GM12878 (cell line): ENCODE measurements at regions of chr3 and their contacts with region 1.

Region 1: GRCh38 chr3:163809540-163809993 is 1268.7 kb downstream of the SI start:
- DNase-seq: peak; percentile 57
- ATAC-seq: peak; percentile 93
- H3K4me3 ChIP-seq: no peak overlapping the region
- H3K27ac ChIP-seq: peak overlapping the region; percentile 65
- H3K4me1 ChIP-seq: no peaks in the 10 kb centered on the region
- H3K27me3 ChIP-seq: no peaks in the 10 kb centered on the region
- CTCF ChIP-seq: no peak
- EP300 ChIP-seq: peak; percentile 54; a peak in 3 of 4 replicates
- POLR2A ChIP-seq: no peak
- RAD21 ChIP-seq: no peak

Region 2: GRCh38 chr3:163785693-163786092 is 23.9 kb before region 1 on chr3:
- CTCF ChIA-PET with region 1: interaction called, 15 read pairs
- POLR2A ChIA-PET with region 1: no interaction called
- RAD21 ChIA-PET with region 1: interaction called, 19 read pairs
- SMC1A ChIA-PET with region 1: interaction called, 11 read pairs
- in situ Hi-C with region 1: no loop called
- intact Hi-C with region 1: no loop called
- DNase-seq: no peak
- ATAC-seq: peak; percentile 82
- H3K4me3 ChIP-seq: no peak overlapping the region
- H3K27ac ChIP-seq: no peak overlapping the region
- H3K4me1 ChIP-seq: no peaks in the 10 kb centered on the region
- H3K27me3 ChIP-seq: no peaks in the 10 kb centered on the region
- CTCF ChIP-seq: peak; percentile 20 to 53 (median 36); a peak in 5 of 6 replicates
- EP300 ChIP-seq: no peak
- POLR2A ChIP-seq: no peak
- RAD21 ChIP-seq: peak; percentile 62

Region 3: GRCh38 chr3:163863146-163863545 is 53.6 kb after region 1 on chr3:
- CTCF ChIA-PET with region 1: no interaction called
- POLR2A ChIA-PET with region 1: no interaction called
- RAD21 ChIA-PET with region 1: no interaction called
- SMC1A ChIA-PET with region 1: no interaction called
- in situ Hi-C with region 1: no loop called
- intact Hi-C with region 1: no loop called
- DNase-seq: no peak
- ATAC-seq: no peak
- H3K4me3 ChIP-seq: no peak overlapping the region
- H3K27ac ChIP-seq: no peak overlapping the region
- H3K4me1 ChIP-seq: no peaks in the 10 kb centered on the region
- H3K27me3 ChIP-seq: no peaks in the 10 kb centered on the region
- CTCF ChIP-seq: no peak
- EP300 ChIP-seq: no peak
- POLR2A ChIP-seq: no peak
- RAD21 ChIP-seq: no peak

Region 4: DNA sequence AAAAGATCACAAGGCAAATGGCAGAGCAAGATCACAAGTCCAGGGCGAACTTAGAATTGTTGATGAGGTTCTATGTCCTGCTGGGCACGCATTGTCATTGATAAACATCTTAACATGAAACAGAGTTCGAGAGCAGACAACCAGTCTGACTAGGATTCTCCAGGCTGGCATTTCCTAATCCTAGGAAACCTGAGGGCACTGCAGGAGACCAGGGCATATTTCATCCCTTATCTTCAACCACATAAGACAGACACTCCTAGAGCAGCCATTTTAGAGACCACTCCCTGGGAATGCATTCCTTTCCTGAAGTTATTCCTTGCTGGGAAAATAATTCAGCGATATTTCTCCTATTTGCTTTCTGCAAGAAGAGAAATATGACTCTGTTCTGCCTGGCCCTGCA is 68.8 kb after region 1 on chr3:
- CTCF ChIA-PET with region 1: no interaction called
- POLR2A ChIA-PET with region 1: interaction called, 3 read pairs
- RAD21 ChIA-PET with region 1: interaction called, 4 read pairs
- SMC1A ChIA-PET with region 1: interaction called, 6 read pairs
- in situ Hi-C with region 1: no loop called
- intact Hi-C with region 1: loop called (anchors 2 kb)
- DNase-seq: no peak
- ATAC-seq: no peak
- H3K4me3 ChIP-seq: no peak overlapping the region
- H3K27ac ChIP-seq: no peak overlapping the region
- H3K4me1 ChIP-seq: no peaks in the 10 kb centered on the region
- H3K27me3 ChIP-seq: no peaks in the 10 kb centered on the region
- CTCF ChIP-seq: no peak
- EP300 ChIP-seq: no peak
- POLR2A ChIP-seq: no peak
- RAD21 ChIP-seq: no peak